ENCODE measurements at regions of chr2 and their contacts with region 1.

Region 1: DNA sequence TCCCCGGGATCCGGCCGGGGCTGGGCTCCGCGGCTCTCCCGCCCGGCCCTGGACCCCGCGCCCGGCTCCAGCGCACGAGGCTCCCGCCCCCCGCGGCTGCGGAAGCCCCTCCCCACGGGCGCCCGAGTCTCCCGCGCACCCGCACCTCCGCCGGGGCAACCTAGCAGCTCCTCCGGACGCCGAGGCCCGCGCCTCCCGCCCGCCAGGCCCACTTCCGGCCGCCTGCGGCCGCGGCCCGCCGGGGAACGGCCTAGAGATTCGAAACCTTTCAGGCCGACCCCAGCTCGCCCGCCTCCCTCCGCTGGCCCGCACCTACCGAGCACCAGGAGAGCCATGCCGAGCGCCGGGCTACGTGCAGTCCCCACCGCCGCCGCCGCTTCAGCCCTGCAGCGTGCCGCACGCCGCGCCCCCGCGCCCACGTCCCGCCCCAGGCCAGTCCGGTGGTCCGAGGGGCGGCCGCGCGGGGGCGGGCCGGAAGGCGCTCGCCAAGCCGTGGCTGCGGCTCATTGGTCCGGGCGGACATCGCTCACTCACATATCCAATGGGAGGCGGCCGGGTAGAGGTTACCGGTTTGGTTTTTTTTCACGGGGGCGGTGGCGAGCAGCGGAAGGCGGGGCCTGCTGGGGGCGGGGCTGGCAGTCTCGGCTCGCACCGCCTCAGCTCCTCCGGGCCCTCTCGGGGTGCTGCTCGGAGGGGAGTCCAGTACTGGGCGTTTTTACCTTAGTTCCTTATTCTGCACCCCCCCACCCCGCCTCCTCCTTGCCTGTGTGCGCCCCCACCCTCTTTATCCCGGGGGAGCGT is at the start of gene PDIA6:
- DNase-seq: peak in 1 of 2 donors; percentile 97
- H3K4me3 ChIP-seq: peak within 1 kb of the TSS; percentile 68 to 90
- H3K27ac ChIP-seq: peak within 1 kb of the TSS; percentile 83
- H3K4me1 ChIP-seq: peaks cover 44% of the 10 kb centered on the region
- H3K27me3 ChIP-seq: no peaks in the 10 kb centered on the region
- CTCF ChIP-seq: no peak
- POLR2A ChIP-seq: peak in 1 of 2 donors; percentile 69
- total RNA-seq, gene PDIA6: 55.0 TPM

Region 2: GRCh38 chr2:10947005-10947440 is 134.5 kb after region 1 on chr2:
- intact Hi-C with region 1: no loop called
- DNase-seq: no peak
- H3K4me3 ChIP-seq: no peak overlapping the region
- H3K27ac ChIP-seq: no peak overlapping the region
- H3K4me1 ChIP-seq: no peaks in the 10 kb centered on the region
- H3K27me3 ChIP-seq: no peaks in the 10 kb centered on the region
- CTCF ChIP-seq: no peak
- POLR2A ChIP-seq: no peak

Region 3: DNA sequence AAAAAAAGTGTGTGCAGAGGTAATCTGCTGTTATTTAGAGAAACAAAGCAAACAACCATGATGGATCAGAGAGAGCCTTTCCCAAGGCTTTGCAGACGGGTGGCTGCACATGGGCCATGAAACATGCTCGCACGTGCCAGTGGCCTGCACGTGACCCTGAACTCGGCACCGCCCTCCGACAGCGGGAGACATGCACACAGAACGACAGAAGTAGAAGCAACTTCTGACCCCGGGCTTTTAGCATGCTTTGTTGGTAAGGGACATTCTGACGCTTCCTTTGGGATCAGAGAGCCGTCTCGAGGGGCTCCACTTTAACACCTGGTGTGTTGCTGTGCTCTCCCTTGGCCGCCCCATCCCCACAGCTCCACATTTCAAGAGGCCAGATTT is 211.7 kb after region 1 on chr2:
- intact Hi-C with region 1: no loop called
- DNase-seq: peak; percentile 74 to 83
- H3K4me3 ChIP-seq: no peak overlapping the region
- H3K27ac ChIP-seq: no peak overlapping the region
- H3K4me1 ChIP-seq: no peaks in the 10 kb centered on the region
- H3K27me3 ChIP-seq: no peaks in the 10 kb centered on the region
- CTCF ChIP-seq: no peak
- POLR2A ChIP-seq: no peak

Region 4: GRCh38 chr2:11457935-11458334 is 645.4 kb after region 1 on chr2:
- intact Hi-C with region 1: loop called (anchors 10 kb)
- DNase-seq: no peak
- H3K4me3 ChIP-seq: no peak overlapping the region
- H3K27ac ChIP-seq: no peak overlapping the region
- H3K4me1 ChIP-seq: peaks cover 34% of the 10 kb centered on the region
- H3K27me3 ChIP-seq: no peaks in the 10 kb centered on the region
- CTCF ChIP-seq: no peak
- POLR2A ChIP-seq: no peak

Region 5: DNA sequence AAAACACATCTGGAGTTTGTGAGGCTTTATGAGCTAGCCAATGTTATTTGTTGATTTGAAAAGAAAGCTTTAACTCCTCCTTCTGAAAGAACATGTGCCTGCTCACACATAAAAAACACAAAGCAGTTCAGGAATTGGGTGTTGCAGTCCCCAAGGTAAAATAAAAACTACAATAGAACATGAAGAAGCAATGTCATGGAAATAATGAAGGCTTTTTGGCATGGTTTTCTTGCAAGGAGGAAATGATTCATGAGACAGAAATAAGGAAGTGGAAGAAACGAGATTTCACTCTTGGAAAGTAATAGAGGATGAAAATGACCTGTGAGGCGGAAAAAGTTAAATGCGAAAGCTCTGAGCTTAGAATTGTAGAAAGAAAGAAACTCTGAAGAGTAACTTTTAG is 1985.3 kb after region 1 on chr2:
- intact Hi-C with region 1: loop called (anchors 5 kb)
- DNase-seq: no peak
- H3K4me3 ChIP-seq: no peak overlapping the region
- H3K27ac ChIP-seq: no peak overlapping the region
- H3K4me1 ChIP-seq: peaks cover 5% of the 10 kb centered on the region
- H3K27me3 ChIP-seq: no peaks in the 10 kb centered on the region
- CTCF ChIP-seq: no peak
- POLR2A ChIP-seq: no peak